MCF 10A (cell line): ENCODE measurements at regions of chr3 and their contacts with region 1.

Region 1: GRCh38 chr3:11221818-11222415 is 50.3 kb upstream of the ATG7 start:
- DNase-seq: no peak
- H3K4me3 Mint-ChIP-seq: no peak overlapping the region
- H3K27ac Mint-ChIP-seq: no peak overlapping the region
- H3K4me1 Mint-ChIP-seq: peaks cover 14% of the 10 kb centered on the region
- H3K27me3 Mint-ChIP-seq: no peaks in the 10 kb centered on the region
- CTCF ChIP-seq: peak; percentile 12

Region 2: GRCh38 chr3:10945683-10946287 is 276.1 kb before region 1 on chr3:
- CTCF ChIA-PET with region 1: interaction called, 3 read pairs
- POLR2A ChIA-PET with region 1: no interaction called
- intact Hi-C with region 1: loop called (anchors 10 kb)
- DNase-seq: peak; percentile 70
- H3K4me3 Mint-ChIP-seq: no peak overlapping the region
- H3K27ac Mint-ChIP-seq: no peak overlapping the region
- H3K4me1 Mint-ChIP-seq: no peaks in the 10 kb centered on the region
- H3K27me3 Mint-ChIP-seq: peaks cover 22% of the 10 kb centered on the region
- CTCF ChIP-seq: peak; percentile 83

Region 3: DNA sequence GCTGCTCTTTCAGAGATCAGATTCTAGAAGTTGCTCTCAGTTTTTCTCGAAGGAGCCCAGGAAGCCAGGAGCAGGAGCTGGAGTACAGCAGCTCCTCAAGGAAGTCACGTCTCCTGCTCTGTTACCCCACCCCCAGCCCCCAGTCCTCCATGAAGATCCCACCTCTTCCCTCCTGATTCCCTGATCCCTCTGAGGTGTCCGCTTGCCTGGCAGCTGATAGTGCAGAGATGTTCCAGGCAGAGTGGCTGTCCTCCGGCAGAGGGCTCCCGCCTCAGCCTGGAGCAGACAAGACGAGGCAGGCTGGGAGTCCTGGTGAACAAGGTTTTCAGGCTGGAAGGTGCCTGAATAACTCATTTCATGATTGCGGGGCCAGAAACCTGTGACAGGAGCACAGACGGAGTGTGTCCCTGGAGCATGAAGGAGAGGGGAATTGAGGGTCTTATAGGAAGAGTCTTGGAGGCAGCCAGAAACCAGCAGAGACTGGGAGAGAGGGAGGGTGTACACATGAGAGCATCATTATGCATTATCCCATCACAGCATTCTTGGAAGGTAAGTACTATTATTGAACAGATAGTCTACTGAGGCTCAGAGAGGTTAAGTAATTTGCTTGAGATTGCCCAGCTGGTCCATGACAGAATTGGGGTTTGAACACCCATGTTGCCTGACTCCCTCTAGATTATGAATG is 66.4 kb before region 1 on chr3:
- CTCF ChIA-PET with region 1: interaction called, 5 read pairs
- POLR2A ChIA-PET with region 1: interaction called, 6 read pairs
- intact Hi-C with region 1: loop called (anchors 2 kb)
- DNase-seq: peak; percentile 79
- H3K4me3 Mint-ChIP-seq: peak overlapping the region; percentile 48
- H3K27ac Mint-ChIP-seq: peak overlapping the region; percentile 9
- H3K4me1 Mint-ChIP-seq: peaks cover 22% of the 10 kb centered on the region
- H3K27me3 Mint-ChIP-seq: no peaks in the 10 kb centered on the region
- CTCF ChIP-seq: peak; percentile 46

Region 4: GRCh38 chr3:11236595-11237461 is 14.9 kb after region 1 on chr3:
- CTCF ChIA-PET with region 1: interaction called, 8 read pairs
- POLR2A ChIA-PET with region 1: interaction called, 35 read pairs
- intact Hi-C with region 1: no loop called
- DNase-seq: peak; percentile 82
- H3K4me3 Mint-ChIP-seq: no peak overlapping the region
- H3K27ac Mint-ChIP-seq: peak overlapping the region; percentile 49
- H3K4me1 Mint-ChIP-seq: peaks cover 26% of the 10 kb centered on the region
- H3K27me3 Mint-ChIP-seq: no peaks in the 10 kb centered on the region
- CTCF ChIP-seq: peak; percentile 95

Region 5: DNA sequence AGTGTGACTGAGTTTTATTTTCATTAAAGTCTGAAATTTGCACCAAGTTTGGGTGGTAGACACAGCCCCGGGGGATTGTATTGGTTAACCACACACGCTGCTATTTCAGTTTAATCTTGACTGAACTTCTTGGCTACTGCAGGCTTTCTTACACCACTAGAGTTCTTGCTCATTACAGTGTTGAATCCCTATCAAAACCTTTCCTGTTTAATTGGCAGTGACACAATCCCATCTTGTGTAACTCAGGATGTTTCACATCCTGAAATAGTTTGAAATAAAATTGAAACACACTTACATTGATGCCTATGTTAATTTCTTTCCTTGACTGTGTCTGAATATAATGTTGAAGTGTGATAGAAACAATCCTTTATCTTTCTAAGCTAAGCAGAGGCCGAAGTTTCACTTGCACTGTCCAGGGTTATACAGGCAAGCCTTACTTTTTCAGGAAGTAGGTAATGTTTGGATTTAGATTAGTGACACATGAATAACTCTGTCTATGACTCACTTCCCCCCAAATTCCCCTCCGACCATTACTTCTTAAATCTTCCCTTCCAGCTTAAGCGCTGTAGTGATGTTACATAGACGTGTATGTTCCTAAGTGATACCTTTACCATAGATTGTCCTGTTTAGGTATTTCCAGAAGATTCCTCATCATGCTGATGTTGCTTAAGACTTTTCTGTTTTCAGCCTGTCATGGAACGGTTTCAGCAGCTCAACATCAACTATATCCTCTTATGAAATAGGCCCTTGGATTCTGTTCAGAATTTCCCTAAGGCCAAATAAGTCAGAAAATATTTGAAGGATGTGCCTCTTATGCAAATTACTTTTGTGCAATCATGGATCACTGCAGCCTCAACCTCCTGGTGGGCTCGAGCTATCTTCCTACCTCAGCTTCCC is 67.1 kb after region 1 on chr3:
- CTCF ChIA-PET with region 1: no interaction called
- POLR2A ChIA-PET with region 1: interaction called, 9 read pairs
- intact Hi-C with region 1: loop called (anchors 2 kb)
- DNase-seq: peak; percentile 93
- H3K4me3 Mint-ChIP-seq: peak overlapping the region; percentile 40
- H3K27ac Mint-ChIP-seq: peak overlapping the region; percentile 89
- H3K4me1 Mint-ChIP-seq: peaks cover 39% of the 10 kb centered on the region
- H3K27me3 Mint-ChIP-seq: no peaks in the 10 kb centered on the region
- CTCF ChIP-seq: no peak

Region 6: GRCh38 chr3:11323813-11324212 is 101.9 kb after region 1 on chr3:
- CTCF ChIA-PET with region 1: no interaction called
- POLR2A ChIA-PET with region 1: no interaction called
- intact Hi-C with region 1: no loop called
- DNase-seq: no peak
- H3K4me3 Mint-ChIP-seq: no peak overlapping the region
- H3K27ac Mint-ChIP-seq: no peak overlapping the region
- H3K4me1 Mint-ChIP-seq: no peaks in the 10 kb centered on the region
- H3K27me3 Mint-ChIP-seq: no peaks in the 10 kb centered on the region
- CTCF ChIP-seq: no peak